A673 (cell line): ENCODE measurements at regions of chr3 and their contacts with region 1.

Region 1: DNA sequence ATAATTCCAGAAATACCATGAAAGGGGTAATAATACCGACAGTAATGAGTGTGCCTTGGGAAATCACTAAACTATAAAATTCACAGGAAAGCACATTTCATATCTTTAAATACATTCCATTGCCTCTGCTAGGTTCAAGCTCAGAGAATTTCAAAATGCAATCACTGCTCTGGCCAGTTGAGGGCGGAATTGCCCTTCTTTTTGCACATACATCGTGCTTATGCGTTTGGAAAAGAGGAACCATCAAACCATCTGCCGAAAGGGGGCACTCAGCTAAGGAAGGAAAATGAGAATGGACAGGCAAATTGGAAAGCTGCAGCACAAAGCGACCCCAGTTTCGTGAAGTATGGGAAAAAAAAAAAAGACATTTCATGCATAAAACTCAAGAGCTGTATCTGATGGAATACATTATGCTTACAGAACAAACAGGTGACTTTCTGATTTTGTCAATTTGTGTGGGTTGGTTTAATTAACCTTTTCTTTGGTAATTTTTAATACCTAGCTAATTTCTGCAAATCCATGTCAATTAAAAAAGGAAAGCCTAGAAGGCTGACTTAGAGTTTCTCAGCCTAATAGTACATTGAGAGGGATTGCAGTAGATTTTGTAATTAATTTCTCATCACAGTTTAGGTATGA is 61.4 kb downstream of the TUSC7 start:
- DNase-seq: peak; percentile 91
- H3K4me3 ChIP-seq: no peak overlapping the region
- H3K27ac ChIP-seq: no peak overlapping the region
- H3K4me1 ChIP-seq: no peaks in the 10 kb centered on the region
- H3K27me3 ChIP-seq: no peaks in the 10 kb centered on the region
- CTCF ChIP-seq: peak; percentile 99

Region 2: DNA sequence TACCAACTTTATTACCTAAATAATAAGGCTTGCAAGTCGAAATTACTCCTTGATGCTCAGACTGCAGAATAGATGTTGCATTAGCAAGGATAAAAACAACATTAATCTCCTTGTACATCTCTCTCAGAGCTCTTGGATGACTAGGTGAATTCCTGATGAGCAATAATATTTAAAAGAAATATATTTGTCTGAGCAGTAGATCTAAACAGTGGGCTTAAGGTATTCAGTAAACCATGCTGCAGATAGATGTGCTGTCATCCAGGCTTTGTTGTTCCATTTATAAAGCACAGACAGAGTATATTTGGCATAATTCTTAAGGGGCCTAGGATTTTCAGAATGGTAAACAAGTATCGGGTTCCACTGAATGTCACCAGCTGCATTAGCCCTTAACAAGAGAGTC is 195.7 kb after region 1 on chr3:
- CTCF ChIA-PET with region 1: no interaction called
- POLR2A ChIA-PET with region 1: no interaction called
- intact Hi-C with region 1: no loop called
- DNase-seq: no peak
- H3K4me3 ChIP-seq: no peak overlapping the region
- H3K27ac ChIP-seq: no peak overlapping the region
- H3K4me1 ChIP-seq: no peaks in the 10 kb centered on the region
- H3K27me3 ChIP-seq: no peaks in the 10 kb centered on the region
- CTCF ChIP-seq: no peak

Region 3: DNA sequence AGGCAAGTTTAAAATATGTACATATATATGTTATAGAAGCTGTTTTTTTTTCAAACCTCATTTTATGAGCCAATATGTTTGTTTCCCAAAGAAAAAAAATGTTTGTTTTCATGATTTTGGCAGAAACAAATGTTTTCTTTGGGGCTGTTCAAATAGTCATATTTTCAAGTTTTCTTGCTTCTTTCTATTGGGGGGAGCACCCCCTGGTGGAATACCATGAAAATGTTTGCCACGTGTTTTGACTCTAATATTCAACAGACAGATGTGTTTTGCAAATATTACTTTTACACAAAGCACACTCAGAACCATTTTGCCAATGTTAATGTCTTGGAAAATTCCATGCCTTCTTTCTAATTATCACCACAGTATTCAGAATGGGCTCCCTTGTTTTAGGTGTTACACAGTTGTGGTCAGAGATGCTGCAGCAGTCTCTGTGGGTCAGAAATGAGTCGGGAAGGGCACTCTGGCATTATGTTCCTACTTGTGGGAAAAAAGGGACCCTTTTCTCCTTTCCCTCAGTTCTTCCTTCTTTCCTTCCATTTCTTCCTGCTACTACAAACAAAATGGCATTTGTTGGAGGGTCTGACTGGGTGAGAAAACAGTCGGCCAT is 755.6 kb after region 1 on chr3:
- CTCF ChIA-PET with region 1: no interaction called
- POLR2A ChIA-PET with region 1: no interaction called
- intact Hi-C with region 1: loop called (anchors 5 kb)
- DNase-seq: peak; percentile 37
- H3K4me3 ChIP-seq: no peak overlapping the region
- H3K27ac ChIP-seq: no peak overlapping the region
- H3K4me1 ChIP-seq: no peaks in the 10 kb centered on the region
- H3K27me3 ChIP-seq: no peaks in the 10 kb centered on the region
- CTCF ChIP-seq: peak; percentile 69

Region 4: DNA sequence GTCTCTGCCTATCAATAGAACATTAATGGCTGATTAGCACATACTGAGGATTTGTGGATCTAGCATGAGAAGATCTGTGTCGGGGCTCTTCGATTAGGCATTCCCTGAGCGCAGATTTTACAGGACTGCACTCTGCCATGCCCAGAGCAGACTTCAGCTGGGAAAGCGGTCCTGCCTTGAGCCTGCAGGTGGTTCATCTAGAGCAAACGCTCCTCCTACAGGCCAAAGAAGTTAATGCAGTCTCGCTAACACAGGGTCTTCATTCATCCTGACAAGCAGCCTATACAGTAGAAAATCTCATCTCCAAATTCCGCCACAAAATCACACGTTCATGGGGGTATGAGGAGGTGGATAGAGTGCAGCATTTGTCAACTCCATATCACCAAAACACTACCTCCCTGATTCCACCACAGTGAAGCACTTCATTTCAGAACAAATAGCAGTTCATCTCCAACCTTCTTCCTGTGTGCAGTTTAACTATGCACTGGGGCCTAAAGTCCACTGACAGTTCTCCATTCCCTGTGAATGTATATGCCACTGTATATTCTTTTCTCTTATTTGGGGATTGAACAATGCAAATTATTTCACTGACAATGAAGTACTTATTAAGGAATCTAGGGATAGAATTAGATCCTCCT is 1857.9 kb after region 1 on chr3:
- CTCF ChIA-PET with region 1: no interaction called
- POLR2A ChIA-PET with region 1: no interaction called
- intact Hi-C with region 1: loop called (anchors 5 kb)
- DNase-seq: peak; percentile 71
- H3K4me3 ChIP-seq: no peak overlapping the region
- H3K27ac ChIP-seq: no peak overlapping the region
- H3K4me1 ChIP-seq: no peaks in the 10 kb centered on the region
- H3K27me3 ChIP-seq: no peaks in the 10 kb centered on the region
- CTCF ChIP-seq: peak; percentile 80